H1 (cell line): ENCODE measurements at regions of chr1 and their contacts with region 1.

Region 1: GRCh38 chr1:150532868-150533302 is 16.3 kb upstream of the ADAMTSL4 start:
- DNase-seq: no peak
- H3K4me3 ChIP-seq: no peak overlapping the region
- H3K27ac ChIP-seq: no peak overlapping the region
- H3K4me1 ChIP-seq: peaks cover 0 to 2% (median 0%) of the 10 kb centered on the region in 4 experiments; a peak in 5 of 7 replicates
- H3K27me3 ChIP-seq: no peaks in the 10 kb centered on the region
- CTCF ChIP-seq: no peak
- EP300 ChIP-seq: no peak
- POLR2A ChIP-seq: no peak
- RAD21 ChIP-seq: no peak

Region 2: DNA sequence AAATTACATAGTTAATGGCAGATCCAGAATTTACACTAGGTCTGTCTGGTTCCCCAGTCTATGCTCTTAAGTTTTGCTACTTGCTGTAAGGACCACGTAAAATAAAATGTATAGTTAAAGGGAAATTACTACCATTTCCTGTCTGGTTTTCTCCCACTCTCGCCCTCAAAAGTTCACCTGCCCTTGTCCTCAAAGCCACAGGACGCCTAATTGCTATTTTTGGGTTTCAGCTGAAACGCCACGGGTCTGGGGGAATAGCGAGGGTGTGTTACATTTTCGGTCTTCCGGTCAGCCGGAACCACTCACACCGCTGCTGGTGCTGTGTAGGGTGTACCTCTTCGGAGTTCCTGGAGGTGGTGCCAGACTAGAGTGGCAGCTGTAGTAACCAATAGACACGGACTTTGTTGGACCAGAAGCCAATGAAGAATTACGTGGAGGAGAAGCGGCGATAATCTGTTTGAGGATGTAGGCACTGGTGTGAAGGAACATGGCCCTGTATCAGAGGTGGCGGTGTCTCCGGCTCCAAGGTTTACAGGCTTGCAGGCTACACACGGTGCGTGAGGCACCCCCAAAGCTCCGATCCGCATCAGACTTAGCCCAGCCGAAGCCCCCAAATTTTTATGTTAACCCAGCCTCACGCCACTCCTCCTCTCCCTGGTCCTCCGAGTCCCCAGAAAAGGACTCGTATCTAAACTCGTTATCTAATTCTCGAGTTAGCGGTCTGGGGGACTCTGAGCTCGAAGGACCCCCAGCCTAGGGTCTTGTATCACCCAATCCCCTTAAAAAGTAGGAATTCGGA is 45.7 kb before region 1 on chr1 and contains the start of gene TARS2:
- CTCF ChIA-PET with region 1: interaction called, 13 read pairs
- POLR2A ChIA-PET with region 1: interaction called, 4 read pairs
- DNase-seq: peak; percentile 93 to 96
- H3K4me3 ChIP-seq: peak within 1 kb of the TSS; percentile 74 to 91 (median 80)
- H3K27ac ChIP-seq: peak within 1 kb of the TSS; percentile 57; the same call in 1 of the 2 replicates
- H3K4me1 ChIP-seq: peaks cover 0 to 4% (median 1%) of the 10 kb centered on the region in 4 experiments; a peak in 5 of 7 replicates
- H3K27me3 ChIP-seq: no peaks in the 10 kb centered on the region
- CTCF ChIP-seq: no peak
- EP300 ChIP-seq: no peak
- POLR2A ChIP-seq: peak; percentile 83 to 96
- RAD21 ChIP-seq: 0 out of 4 replicates have a peak, but pooled peaks of 1 of the 2 experiments have one; percentile 6
- total RNA-seq, gene TARS2: 32.7 and 39.1 TPM in 2 replicates

Region 3: GRCh38 chr1:150515328-150516048 is 17.4 kb before region 1 on chr1 and contains the start of gene FALEC:
- CTCF ChIA-PET with region 1: interaction called, 253 read pairs
- POLR2A ChIA-PET with region 1: interaction called, 10 read pairs
- DNase-seq: peak; percentile 87 to 98
- H3K4me3 ChIP-seq: peak within 1 kb of the TSS; percentile 72 to 91 (median 82)
- H3K27ac ChIP-seq: no peak within 1 kb of the TSS
- H3K4me1 ChIP-seq: peaks cover 0 to 4% (median 3%) of the 10 kb centered on the region in 4 experiments; a peak in 5 of 7 replicates
- H3K27me3 ChIP-seq: no peaks in the 10 kb centered on the region; a peak in 1 of 7 replicates
- CTCF ChIP-seq: no peak
- EP300 ChIP-seq: no peak
- POLR2A ChIP-seq: peak in 1 of 2 experiments; percentile 30; a peak in 2 of 3 replicates
- RAD21 ChIP-seq: 0 out of 4 replicates have a peak, but pooled peaks of 1 of the 2 experiments have one; percentile 5
- total RNA-seq, gene FALEC: 1.1 TPM in 1 of 2 replicates, not detected in the other

Region 4: GRCh38 chr1:150543500-150544141 is 10.7 kb after region 1 on chr1:
- CTCF ChIA-PET with region 1: interaction called, 253 read pairs
- POLR2A ChIA-PET with region 1: interaction called, 39 read pairs
- DNase-seq: no peak
- H3K4me3 ChIP-seq: no peak overlapping the region
- H3K27ac ChIP-seq: no peak overlapping the region
- H3K4me1 ChIP-seq: no peaks in the 10 kb centered on the region
- H3K27me3 ChIP-seq: peaks cover 0 to 8% (median 6%) of the 10 kb centered on the region in 4 experiments; a peak in 5 of 7 replicates
- CTCF ChIP-seq: no peak
- EP300 ChIP-seq: no peak
- POLR2A ChIP-seq: no peak
- RAD21 ChIP-seq: no peak

Region 5: GRCh38 chr1:150548632-150549495 is 16.0 kb after region 1 on chr1 and contains the start of gene ADAMTSL4:
- CTCF ChIA-PET with region 1: interaction called, 28 read pairs
- POLR2A ChIA-PET with region 1: interaction called, 39 read pairs
- DNase-seq: no peak
- H3K4me3 ChIP-seq: peak within 1 kb of the TSS; percentile 51 to 65 (median 53)
- H3K27ac ChIP-seq: no peak within 1 kb of the TSS
- H3K4me1 ChIP-seq: peaks cover 2 to 19% (median 11%) of the 10 kb centered on the region in 4 experiments
- H3K27me3 ChIP-seq: peaks cover 0 to 19% (median 10%) of the 10 kb centered on the region in 4 experiments; a peak in 5 of 7 replicates
- CTCF ChIP-seq: no peak
- EP300 ChIP-seq: no peak
- POLR2A ChIP-seq: no peak
- RAD21 ChIP-seq: no peak
- total RNA-seq, gene ADAMTSL4: 5.3 and 5.4 TPM in 2 replicates

Region 6: GRCh38 chr1:150578965-150579798 is 46.3 kb after region 1 on chr1 and contains the start of gene MCL1:
- CTCF ChIA-PET with region 1: no interaction called
- POLR2A ChIA-PET with region 1: interaction called, 12 read pairs
- DNase-seq: peak; percentile 82 to 90
- H3K4me3 ChIP-seq: peak within 1 kb of the TSS; percentile 100
- H3K27ac ChIP-seq: peak within 1 kb of the TSS; percentile 98
- H3K4me1 ChIP-seq: peaks cover 5 to 15% (median 13%) of the 10 kb centered on the region in 4 experiments
- H3K27me3 ChIP-seq: no peaks in the 10 kb centered on the region
- CTCF ChIP-seq: no peak
- EP300 ChIP-seq: 0 out of 3 replicates have a peak, but pooled peaks of 1 of the 2 experiments have one; percentile 2
- POLR2A ChIP-seq: peak; percentile 89 to 97
- RAD21 ChIP-seq: peak in 1 of 2 experiments; percentile 15; a peak in 1 of 4 replicates
- total RNA-seq, gene MCL1: 196 and 218 TPM in 2 replicates

Region 7: DNA sequence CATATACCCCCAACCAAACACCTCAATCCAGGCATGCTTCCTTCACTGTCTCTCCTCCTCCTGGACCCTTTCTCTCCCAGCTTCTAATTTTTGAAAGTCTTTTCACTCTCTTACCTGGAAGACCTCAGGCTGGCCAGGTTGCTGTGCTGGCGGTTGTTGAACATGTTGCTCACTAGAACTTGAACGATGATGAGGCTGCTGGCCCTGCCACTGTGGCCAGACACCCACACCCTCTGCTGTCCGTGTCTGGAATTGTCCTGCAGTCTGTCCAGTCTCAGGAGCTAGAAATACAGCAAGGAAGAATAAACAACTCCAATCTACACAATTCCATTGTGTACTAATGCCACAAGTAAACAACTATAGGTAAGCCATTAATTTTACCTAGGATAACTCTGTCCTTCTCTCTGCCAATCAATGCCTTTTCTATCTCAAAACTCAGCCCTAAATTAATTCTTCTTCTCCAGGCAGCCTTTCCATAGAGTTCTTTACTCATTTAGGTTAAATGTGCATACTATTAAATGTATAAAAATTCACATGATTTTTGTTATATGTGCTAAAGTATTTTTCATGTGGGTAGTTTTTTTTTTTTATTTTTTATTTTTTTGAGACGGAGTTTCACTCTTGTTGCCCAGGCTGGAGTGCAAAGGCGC is 280.3 kb after region 1 on chr1:
- CTCF ChIA-PET with region 1: interaction called, 10 read pairs
- POLR2A ChIA-PET with region 1: interaction called, 3 read pairs
- DNase-seq: peak in 1 of 2 experiments; percentile 29
- H3K4me3 ChIP-seq: no peak overlapping the region
- H3K27ac ChIP-seq: no peak overlapping the region
- H3K4me1 ChIP-seq: peaks cover 0 to 2% (median under 1%) of the 10 kb centered on the region in 4 experiments; a peak in 3 of 7 replicates
- H3K27me3 ChIP-seq: no peaks in the 10 kb centered on the region
- CTCF ChIP-seq: peak; percentile 71 to 79 (median 78)
- EP300 ChIP-seq: no peak
- POLR2A ChIP-seq: no peak
- RAD21 ChIP-seq: peak; percentile 84 to 87